ENCODE measurements at regions of chr3 and their contacts with region 1.

Region 1: GRCh38 chr3:122305818-122306621 is 19.0 kb upstream of the CSTA start:
- DNase-seq: peak; percentile 27
- ATAC-seq: peak; percentile 51
- H3K4me3 Mint-ChIP-seq: no peak overlapping the region
- H3K27ac Mint-ChIP-seq: no peak overlapping the region
- H3K4me1 Mint-ChIP-seq: no peaks in the 10 kb centered on the region
- H3K27me3 Mint-ChIP-seq: no peaks in the 10 kb centered on the region

Region 2: GRCh38 chr3:122322095-122323075 is 16.4 kb after region 1 on chr3:
- CTCF ChIA-PET with region 1: interaction called, 15 read pairs
- POLR2A ChIA-PET with region 1: no interaction called
- intact Hi-C with region 1: no loop called
- DNase-seq: peak; percentile 57
- ATAC-seq: peak; percentile 96
- H3K4me3 Mint-ChIP-seq: no peak overlapping the region
- H3K27ac Mint-ChIP-seq: peak overlapping the region; percentile 48
- H3K4me1 Mint-ChIP-seq: peaks cover 19% of the 10 kb centered on the region
- H3K27me3 Mint-ChIP-seq: no peaks in the 10 kb centered on the region

Region 3: GRCh38 chr3:122356415-122356814 is 50.4 kb after region 1 on chr3:
- CTCF ChIA-PET with region 1: interaction called, 3 read pairs
- POLR2A ChIA-PET with region 1: no interaction called
- intact Hi-C with region 1: loop called in 1 of 2 experiments (anchors 2 kb)
- DNase-seq: peak; percentile 45
- ATAC-seq: no peak
- H3K4me3 Mint-ChIP-seq: no peak overlapping the region
- H3K27ac Mint-ChIP-seq: no peak overlapping the region
- H3K4me1 Mint-ChIP-seq: peaks cover 4% of the 10 kb centered on the region
- H3K27me3 Mint-ChIP-seq: no peaks in the 10 kb centered on the region

Region 4: DNA sequence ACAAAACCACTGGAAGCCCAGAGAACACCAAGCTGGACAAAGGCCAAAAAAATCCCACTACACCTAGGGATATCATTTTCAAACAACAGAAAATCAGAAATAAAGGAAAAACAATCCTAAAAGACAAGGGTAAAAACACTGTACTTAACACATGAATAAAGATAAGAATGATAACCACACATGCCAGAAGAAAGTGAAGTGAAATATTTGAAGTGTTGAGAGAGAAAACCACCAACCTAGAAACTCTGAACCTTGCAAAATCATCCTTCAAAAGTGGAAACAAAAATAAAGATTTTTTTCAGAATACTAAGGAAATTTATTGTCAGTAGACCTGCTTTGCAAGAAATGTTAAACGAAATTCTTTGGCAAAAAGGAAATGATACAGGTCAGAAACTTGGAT is 163.6 kb after region 1 on chr3:
- CTCF ChIA-PET with region 1: no interaction called
- POLR2A ChIA-PET with region 1: no interaction called
- intact Hi-C with region 1: no loop called
- DNase-seq: no peak
- ATAC-seq: no peak
- H3K4me3 Mint-ChIP-seq: no peak overlapping the region
- H3K27ac Mint-ChIP-seq: no peak overlapping the region
- H3K4me1 Mint-ChIP-seq: peaks cover 59% of the 10 kb centered on the region
- H3K27me3 Mint-ChIP-seq: no peaks in the 10 kb centered on the region

Measured in activated CD4-positive, alpha-beta T cell treated with anti-CD3 and anti-CD28 coated beads for 36 hours (primary cell).